Activated CD4-positive, alpha-beta T cell treated with anti-CD3 and anti-CD28 coated beads, Interleukin-2, amount 10 ng/mL, durations not matched to agents 24 days and 14 days (primary cell): ENCODE measurements at regions of chr11 and their contacts with region 1.

Region 1: DNA sequence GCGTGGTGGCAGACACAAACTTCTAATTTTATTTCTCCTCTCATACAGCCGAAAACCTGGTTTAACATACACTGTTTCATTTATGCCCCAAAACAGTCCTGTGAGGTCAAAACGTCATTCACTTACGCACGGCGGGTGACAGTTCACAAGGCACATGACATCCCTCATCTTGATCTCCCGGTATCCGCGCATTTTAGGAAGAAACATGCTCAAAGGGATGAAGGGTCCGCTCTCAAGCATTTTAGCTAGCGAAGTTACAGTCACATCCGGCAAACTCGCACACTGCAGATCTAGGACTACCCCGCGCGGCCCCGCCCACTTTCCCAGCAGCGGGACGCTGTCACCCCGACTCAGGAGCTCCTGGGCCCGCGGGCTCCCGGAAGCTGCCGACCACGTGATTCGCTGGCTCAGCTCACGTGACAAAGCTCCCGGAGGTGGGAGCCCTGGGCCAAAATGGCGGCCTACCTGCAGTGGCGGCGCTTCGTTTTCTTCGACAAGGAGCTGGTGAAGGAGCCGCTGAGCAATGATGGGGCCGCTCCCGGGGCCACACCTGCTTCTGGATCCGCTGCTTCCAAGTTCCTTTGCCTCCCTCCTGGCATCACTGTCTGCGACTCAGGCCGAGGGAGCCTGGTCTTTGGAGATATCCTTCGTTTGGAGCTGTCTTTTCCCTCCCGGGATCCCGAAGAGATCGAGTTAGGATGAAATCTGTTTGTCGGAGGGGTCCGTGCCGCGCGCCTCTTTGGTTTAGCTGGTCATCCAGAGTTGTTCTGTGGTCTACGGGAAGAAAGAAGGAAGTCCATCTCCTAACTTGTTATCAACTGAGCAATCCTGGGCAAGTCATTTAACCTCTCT is at the start of gene VPS11:
- DNase-seq: peak; percentile 99
- H3K4me3 Mint-ChIP-seq: peak within 1 kb of the TSS; percentile 92
- H3K27ac Mint-ChIP-seq: peak within 1 kb of the TSS; percentile 93
- H3K4me1 Mint-ChIP-seq: peaks cover 22% of the 10 kb centered on the region
- H3K27me3 Mint-ChIP-seq: no peaks in the 10 kb centered on the region
- total RNA-seq, gene VPS11: 20.2 and 20.9 TPM in 2 replicates

Region 2: DNA sequence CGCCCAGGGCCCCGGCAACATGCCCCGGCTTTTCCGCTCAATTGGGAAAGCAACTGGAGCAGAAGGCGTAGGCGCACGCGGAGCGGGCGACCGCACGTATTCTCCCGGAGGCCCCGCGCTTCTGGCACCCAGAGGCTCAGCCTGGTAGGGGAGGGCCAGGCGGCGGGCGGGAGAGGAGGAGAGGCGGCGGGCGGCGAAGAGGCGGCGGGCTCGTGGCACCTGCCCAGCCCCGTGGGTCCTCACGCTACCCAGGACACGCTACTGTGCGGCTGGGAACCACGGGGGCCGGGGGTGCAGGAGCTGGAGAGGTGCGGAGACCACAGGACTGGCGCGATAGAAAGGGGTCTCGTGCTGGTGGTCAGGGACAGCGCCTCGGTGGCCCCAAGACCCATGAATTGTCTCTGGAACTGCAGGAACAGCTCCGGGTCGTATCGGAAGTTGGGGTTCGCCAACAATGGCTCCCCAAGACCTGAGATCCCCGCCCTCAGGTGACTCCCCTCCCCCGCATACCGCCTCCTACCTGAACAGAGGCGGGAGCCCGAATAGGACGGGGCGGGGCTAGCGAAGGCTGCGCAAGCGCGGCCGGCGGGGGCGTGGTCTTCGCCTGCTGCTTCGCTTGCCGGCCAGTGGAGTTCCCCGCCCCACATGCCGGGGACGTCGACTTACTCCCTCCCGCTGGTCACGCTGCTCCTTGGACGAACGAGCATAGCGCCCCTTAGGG is 37.1 kb before region 1 on chr11 and contains the start of gene SLC37A4:
- intact Hi-C with region 1: loop called (anchors 2 kb)
- DNase-seq: peak; percentile 100
- H3K4me3 Mint-ChIP-seq: peak within 1 kb of the TSS; percentile 83
- H3K27ac Mint-ChIP-seq: peak within 1 kb of the TSS; percentile 89
- H3K4me1 Mint-ChIP-seq: peaks cover 19% of the 10 kb centered on the region
- H3K27me3 Mint-ChIP-seq: no peaks in the 10 kb centered on the region
- total RNA-seq, gene SLC37A4: 28.8 and 31.6 TPM in 2 replicates

Region 3: GRCh38 chr11:119084663-119085436 is 17.3 kb after region 1 on chr11 and contains the start of gene HMBS:
- intact Hi-C with region 1: loop called (anchors 1 kb)
- DNase-seq: peak; percentile 98
- H3K4me3 Mint-ChIP-seq: peak within 1 kb of the TSS; percentile 97
- H3K27ac Mint-ChIP-seq: peak within 1 kb of the TSS; percentile 95
- H3K4me1 Mint-ChIP-seq: peaks cover 24% of the 10 kb centered on the region
- H3K27me3 Mint-ChIP-seq: no peaks in the 10 kb centered on the region
- total RNA-seq, gene HMBS: 60.9 and 62.8 TPM in 2 replicates

Region 4: GRCh38 chr11:119106564-119107537 is 39.3 kb after region 1 on chr11 and contains the start of gene C2CD2L:
- intact Hi-C with region 1: no loop called
- DNase-seq: peak; percentile 97
- H3K4me3 Mint-ChIP-seq: peak within 1 kb of the TSS; percentile 95
- H3K27ac Mint-ChIP-seq: peak within 1 kb of the TSS; percentile 95
- H3K4me1 Mint-ChIP-seq: peaks cover 43% of the 10 kb centered on the region
- H3K27me3 Mint-ChIP-seq: no peaks in the 10 kb centered on the region
- total RNA-seq, gene C2CD2L: 31.5 and 33.5 TPM in 2 replicates

Region 5: DNA sequence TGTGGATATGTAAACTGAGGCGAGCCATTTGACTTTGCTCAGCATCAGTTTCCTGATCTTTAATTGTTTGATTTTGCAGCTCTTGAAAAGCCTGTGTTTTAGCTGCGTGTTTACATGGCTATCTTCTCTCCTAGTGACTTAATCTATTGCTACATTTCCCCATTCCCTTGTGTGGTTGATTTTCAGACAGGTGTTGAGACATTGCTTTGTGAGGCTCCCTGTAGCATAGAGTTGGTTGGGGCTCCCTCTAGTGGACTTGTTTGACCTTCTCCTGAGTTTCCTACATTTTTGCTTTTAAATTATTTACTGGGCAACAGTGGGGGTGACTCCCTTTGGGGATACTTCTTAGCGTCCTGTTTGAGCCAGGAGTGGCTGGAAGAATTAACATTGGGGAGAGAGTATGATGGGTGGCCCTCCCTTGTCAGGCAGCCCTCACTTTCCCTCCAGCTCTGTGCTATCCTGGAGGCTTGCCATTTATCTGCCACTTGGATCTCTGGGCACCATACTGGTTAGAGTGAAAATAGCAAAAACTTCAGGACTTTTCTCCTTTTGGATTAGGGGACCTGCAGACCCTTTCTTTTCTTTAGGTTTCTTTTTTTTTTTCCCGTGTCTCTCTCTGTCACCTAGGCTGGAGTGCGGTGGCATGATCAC is 129.4 kb after region 1 on chr11:
- intact Hi-C with region 1: loop called (anchors 2 kb)
- DNase-seq: peak; percentile 93
- H3K4me3 Mint-ChIP-seq: no peak overlapping the region
- H3K27ac Mint-ChIP-seq: no peak overlapping the region
- H3K4me1 Mint-ChIP-seq: peaks cover 6% of the 10 kb centered on the region
- H3K27me3 Mint-ChIP-seq: no peaks in the 10 kb centered on the region

Region 6: DNA sequence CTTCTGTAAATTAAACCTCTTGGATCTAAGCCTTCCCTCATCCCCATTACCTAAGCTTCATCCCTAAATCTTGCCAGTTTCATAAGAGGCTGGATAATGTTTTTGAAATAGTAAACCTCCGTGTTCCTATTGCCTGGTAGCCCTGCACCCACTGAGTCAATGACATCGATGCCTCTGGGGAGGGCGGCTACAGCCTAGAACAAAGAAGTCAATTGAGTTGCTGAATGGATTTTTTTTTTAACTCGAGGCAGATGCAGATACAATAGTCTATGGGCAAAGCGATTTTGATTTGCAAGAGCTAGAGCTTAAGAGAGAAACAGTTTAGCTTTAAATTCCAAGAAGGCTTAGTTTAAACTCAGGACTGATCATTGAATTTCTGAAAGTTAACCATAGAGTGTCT is 540.1 kb after region 1 on chr11:
- intact Hi-C with region 1: no loop called
- DNase-seq: no peak
- H3K4me3 Mint-ChIP-seq: no peak overlapping the region
- H3K27ac Mint-ChIP-seq: no peak overlapping the region
- H3K4me1 Mint-ChIP-seq: no peaks in the 10 kb centered on the region
- H3K27me3 Mint-ChIP-seq: peaks cover 9% of the 10 kb centered on the region